PC-3 (cell line): ENCODE measurements at regions of chr3 and their contacts with region 1.

Region 1: GRCh38 chr3:111498022-111498421 is 44.0 kb upstream of the CD96 start:
- DNase-seq: no peak
- ATAC-seq: no peak
- H3K4me3 ChIP-seq: no peak overlapping the region
- H3K27ac ChIP-seq: no peak overlapping the region
- H3K4me1 ChIP-seq: no peaks in the 10 kb centered on the region
- H3K27me3 ChIP-seq: no peaks in the 10 kb centered on the region
- CTCF ChIP-seq: no peak

Region 2: GRCh38 chr3:111246967-111247760 is 250.9 kb before region 1 on chr3:
- CTCF ChIA-PET with region 1: no interaction called
- POLR2A ChIA-PET with region 1: no interaction called
- intact Hi-C with region 1: loop called (anchors 1 kb)
- DNase-seq: peak; percentile 57
- ATAC-seq: peak; percentile 57
- H3K4me3 ChIP-seq: no peak overlapping the region
- H3K27ac ChIP-seq: no peak overlapping the region
- H3K4me1 ChIP-seq: peaks cover 9% of the 10 kb centered on the region; the same call in 1 of the 2 replicates
- H3K27me3 ChIP-seq: no peaks in the 10 kb centered on the region
- CTCF ChIP-seq: no peak

Region 3: DNA sequence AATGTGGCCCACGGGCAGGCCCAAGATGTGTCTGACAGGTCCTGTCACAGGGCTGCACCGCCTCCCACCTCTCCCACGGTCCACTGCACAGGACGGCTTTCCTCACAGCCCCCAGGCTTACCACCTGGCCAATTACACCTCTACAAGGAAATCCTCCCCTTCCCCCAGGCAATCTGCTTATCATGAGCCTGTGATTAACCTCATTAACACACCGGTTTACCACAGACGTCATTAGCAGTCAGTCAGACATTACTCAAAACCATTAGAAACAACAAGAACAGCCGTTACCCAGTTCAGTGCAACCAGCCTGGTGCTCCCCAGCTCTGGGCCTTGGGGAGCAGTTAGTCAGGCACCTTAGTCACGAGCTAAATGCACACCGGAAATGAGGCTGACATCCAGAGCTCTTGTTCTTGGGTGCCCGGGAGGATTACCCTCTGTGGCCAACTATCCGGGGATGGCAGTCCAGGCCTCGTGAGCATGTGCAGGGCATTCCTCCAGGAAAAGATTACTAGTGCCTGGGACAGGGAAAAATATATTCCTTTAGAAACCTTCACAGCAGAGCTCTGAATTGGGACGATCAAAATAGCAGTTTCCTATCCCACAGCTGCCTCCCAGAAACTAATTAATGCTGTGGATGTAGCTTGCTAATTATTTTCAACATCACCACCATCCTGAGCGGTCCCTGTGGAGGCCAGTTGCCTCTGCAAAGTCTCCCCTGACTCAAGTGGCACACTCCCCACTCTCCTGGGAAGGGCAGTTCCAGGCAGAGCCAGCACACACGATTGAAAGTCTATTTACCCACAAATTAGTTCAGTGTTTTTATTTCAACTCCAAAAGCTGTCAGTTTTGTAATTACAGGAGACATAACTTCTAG is 214.5 kb after region 1 on chr3:
- CTCF ChIA-PET with region 1: no interaction called
- POLR2A ChIA-PET with region 1: no interaction called
- intact Hi-C with region 1: no loop called
- DNase-seq: no peak
- ATAC-seq: no peak
- H3K4me3 ChIP-seq: no peak overlapping the region
- H3K27ac ChIP-seq: no peak overlapping the region
- H3K4me1 ChIP-seq: peaks cover 21% of the 10 kb centered on the region
- H3K27me3 ChIP-seq: no peaks in the 10 kb centered on the region
- CTCF ChIP-seq: no peak